ENCODE measurements at regions of chr2 and their contacts with region 1.

Region 1: DNA sequence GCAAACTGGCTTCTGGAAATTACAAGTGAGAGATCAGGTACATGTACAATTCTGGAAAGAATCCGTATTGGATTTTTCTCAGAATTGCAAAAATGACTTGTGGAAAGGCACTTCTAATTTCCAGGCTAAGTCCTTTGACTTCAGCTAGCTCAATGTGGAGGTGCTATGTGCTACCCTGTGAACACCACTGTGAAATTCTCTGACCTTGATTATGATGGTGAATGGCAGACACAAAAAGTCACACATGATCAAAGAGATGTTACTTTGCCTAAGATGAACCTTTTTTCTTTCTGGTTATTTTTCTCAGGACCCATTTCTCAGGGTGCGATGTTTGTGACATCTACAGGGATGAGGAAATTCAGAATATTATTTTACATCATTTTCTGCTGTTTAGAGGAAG is 856.6 kb upstream of the VRK2 start:
- DNase-seq: no peak

Region 2: DNA sequence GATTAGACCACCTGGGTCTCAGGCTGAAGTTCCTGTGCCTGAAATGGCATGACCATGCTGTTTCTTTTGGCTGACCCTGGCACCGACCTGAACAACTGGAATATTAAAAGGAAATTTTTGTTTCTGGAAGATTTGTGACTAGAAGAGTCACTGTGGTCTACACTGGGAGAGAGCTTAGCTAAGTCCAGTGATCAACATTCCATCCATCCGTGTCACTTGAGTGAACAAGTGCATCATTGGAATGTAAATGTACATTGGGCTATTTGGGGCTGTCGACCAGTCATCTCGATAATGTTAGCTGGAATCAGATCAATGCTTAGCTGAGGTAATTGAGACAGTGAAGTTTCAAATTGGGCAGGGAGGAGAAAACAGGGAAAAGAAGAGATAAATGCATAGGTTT is 1101.6 kb before region 1 on chr2:
- intact Hi-C with region 1: loop called in 1 of 2 experiments (anchors 5 kb)
- DNase-seq: no peak

Region 3: GRCh38 chr2:57105694-57106093 is 84.3 kb before region 1 on chr2:
- intact Hi-C with region 1: no loop called
- DNase-seq: no peak